Tibial artery (tissue), 4 donors: ENCODE measurements at regions of chr2 and their contacts with region 1.

Region 1: DNA sequence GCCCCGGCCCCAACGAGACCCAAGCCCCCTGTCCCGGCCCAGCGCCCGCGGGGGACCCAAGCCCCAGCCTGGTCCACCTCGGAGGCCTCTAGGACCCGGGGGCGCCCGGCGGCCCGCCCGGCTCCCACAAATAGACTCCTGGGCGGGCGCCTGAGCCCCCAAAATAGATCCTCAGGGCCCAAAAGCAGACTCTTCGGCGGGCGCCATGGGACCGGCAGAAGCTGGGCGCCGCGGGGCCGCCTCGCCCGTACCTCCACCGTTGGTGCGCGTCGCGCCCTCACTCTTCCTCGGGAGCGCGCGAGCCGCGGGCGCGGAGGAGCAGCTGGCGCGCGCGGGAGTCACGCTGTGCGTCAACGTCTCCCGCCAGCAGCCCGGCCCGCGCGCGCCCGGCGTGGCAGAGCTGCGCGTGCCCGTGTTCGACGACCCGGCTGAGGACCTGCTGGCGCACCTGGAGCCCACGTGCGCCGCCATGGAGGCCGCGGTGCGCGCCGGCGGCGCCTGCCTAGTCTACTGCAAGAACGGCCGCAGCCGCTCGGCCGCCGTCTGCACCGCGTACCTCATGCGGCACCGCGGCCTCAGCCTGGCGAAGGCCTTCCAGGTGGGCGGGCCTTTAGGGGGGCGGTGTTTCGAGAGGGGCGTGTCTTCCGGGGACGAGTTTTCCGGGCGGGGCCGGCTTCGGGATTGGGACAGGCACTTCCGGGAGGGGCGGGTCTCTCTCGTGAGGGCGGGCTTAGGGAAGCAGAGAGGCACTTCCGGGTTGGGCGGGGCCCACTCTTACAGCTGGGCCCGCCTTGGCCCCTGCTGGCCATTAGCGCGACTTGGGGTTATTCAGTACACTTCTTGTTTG is 546 bp downstream of the DUSP28 start:
- DNase-seq: peak; percentile 99 to 100
- H3K4me3 ChIP-seq: peak overlapping the region; percentile 93 to 96
- H3K27ac ChIP-seq: peak overlapping the region; percentile 99 to 100
- H3K4me1 ChIP-seq: peaks cover under 1 to 56% (median 39%) of the 10 kb centered on the region in 4 donors
- H3K27me3 ChIP-seq: peaks cover 0 to 8% of the 10 kb centered on the region in 2 donors
- CTCF ChIP-seq: peak; percentile 43 to 46

Region 2: DNA sequence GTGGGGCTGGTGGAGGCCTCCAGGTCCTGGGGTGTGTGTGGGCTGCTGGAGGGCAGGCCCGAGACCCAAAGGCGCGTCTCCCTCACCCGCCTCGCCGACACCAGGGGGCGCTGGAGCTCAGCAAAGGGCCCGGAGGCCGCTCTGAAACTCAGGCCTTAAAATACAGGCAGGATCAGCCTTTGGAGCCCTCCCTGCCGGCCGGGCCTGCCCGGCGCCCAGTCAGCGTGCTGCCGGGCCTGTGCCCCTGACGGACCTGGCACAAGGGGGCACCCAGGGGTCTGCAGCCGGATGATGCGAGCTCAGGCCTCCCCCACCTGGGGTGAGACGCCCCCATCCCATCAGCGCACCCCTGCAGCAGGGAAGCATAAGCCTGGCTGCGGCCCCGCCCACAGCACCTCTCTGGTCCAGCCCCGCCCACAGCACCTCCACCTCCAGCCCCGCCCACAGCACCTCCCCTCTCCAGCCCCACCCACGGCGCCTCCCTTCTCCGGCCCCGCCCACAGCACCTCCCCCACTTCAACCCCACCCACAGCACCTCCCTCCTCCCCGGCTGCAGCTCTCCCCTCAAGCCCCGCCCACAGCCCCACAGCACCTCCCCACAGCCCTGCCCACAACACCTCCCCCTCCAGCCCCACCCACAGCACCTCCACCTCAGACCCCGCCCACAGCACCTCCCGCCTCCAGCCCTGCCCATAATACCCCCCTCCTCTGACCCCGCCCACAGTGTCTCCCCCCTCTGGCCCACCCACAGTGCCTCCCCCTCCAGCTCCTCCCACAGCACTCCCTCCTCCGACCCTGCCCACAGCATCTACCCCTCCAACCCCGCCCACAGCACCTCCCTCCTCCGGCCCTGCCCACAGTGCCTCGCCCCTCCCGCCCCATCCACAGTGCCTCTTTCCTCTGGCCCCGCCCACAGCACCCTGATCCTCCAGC is 327.5 kb before region 1 on chr2:
- intact Hi-C with region 1: loop called (anchors 10 kb)
- DNase-seq: peak; percentile 76 to 95
- H3K4me3 ChIP-seq: peak overlapping the region; percentile 33 to 51
- H3K27ac ChIP-seq: peak overlapping the region; percentile 65 to 72
- H3K4me1 ChIP-seq: peaks cover 0 to 54% (median 34%) of the 10 kb centered on the region in 4 donors
- H3K27me3 ChIP-seq: no peaks in the 10 kb centered on the region
- CTCF ChIP-seq: peak; percentile 90 to 98

Region 3: DNA sequence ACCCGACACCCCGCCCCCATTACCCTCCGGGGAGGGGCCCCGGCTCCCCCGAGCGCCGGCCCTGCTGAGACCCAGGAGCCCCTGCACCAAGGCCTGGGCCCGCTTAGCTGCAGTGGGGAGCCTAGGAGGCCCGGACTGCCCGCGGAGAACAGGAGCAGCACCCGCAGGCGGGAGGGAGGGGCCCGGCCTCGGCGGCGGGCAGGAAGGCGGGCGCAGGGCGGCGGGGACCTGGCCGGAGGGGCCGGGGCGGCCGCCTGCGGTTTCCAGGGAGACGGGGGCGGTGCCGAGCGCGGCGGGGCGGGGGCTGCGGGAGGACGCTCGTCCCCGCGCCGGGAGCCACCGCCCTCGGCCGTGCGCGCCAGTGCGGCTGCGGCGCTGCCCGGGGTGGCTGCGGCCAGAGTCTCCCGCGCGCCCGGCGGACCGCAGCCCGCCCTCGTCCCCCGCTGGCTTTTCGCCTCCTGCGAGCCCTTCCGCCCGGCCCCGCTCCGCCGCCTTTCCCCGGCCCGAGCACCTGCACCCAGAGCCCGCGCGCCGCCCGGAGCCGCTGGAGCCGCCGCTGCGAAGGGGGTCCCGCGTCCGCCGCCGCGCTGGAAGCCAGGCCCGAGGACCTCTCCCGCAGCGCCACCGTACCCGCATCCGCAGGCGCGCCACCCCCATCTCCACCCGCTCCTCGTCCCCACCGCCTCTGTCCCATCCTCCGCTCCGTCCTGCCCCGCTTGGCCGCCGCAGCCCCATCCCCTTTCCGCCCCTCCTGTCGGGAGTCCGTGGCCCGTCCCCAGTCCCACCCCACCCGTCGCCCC is 108.0 kb before region 1 on chr2:
- intact Hi-C with region 1: loop called (anchors 10 kb)
- DNase-seq: no peak
- H3K4me3 ChIP-seq: peak overlapping the region; percentile 61 to 83
- H3K27ac ChIP-seq: no peak overlapping the region
- H3K4me1 ChIP-seq: peaks cover 0 to 58% (median 35%) of the 10 kb centered on the region in 4 donors
- H3K27me3 ChIP-seq: no peaks in the 10 kb centered on the region
- CTCF ChIP-seq: no peak

Region 4: DNA sequence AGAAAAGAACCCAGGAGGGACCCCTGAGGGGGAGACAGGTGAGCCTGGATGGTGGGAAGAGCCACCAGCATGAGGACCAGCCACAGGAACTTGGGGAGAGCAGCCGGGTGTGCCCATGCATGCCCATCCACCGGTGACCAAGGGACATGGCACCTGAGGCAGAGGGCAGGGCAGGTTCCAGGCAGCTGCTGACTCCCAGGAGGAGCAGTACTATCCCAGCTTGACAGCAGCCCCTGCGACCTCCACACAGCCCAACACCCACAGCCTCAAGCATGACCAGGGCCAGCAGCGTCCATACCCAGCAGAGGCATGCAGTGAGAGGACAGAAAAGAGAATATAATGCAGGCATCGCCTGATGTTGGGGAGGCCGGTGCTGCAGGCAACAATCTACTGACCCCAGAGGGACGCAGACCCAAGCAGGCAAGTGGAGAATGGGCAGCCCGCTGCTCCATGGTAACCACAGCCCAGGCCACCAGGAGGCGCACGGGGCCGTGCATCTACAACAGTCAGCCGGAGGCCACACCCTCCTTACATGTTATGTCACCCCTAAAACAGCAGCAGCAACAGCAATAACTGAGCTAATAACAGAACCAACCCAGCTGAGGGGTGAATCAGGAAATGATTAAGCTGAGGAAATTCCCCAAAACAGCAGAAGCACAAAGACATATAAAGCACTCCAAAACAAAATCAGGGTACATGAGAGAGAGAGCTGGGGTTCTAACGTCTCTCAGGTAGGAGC is 47.0 kb before region 1 on chr2:
- intact Hi-C with region 1: no loop called
- DNase-seq: peak; percentile 81 to 85
- H3K4me3 ChIP-seq: no peak overlapping the region
- H3K27ac ChIP-seq: no peak overlapping the region
- H3K4me1 ChIP-seq: no peaks in the 10 kb centered on the region
- H3K27me3 ChIP-seq: no peaks in the 10 kb centered on the region
- CTCF ChIP-seq: peak; percentile 70 to 72